Transverse colon (tissue), 4 donors: ENCODE measurements at regions of chr11 and their contacts with region 1.

Region 1: DNA sequence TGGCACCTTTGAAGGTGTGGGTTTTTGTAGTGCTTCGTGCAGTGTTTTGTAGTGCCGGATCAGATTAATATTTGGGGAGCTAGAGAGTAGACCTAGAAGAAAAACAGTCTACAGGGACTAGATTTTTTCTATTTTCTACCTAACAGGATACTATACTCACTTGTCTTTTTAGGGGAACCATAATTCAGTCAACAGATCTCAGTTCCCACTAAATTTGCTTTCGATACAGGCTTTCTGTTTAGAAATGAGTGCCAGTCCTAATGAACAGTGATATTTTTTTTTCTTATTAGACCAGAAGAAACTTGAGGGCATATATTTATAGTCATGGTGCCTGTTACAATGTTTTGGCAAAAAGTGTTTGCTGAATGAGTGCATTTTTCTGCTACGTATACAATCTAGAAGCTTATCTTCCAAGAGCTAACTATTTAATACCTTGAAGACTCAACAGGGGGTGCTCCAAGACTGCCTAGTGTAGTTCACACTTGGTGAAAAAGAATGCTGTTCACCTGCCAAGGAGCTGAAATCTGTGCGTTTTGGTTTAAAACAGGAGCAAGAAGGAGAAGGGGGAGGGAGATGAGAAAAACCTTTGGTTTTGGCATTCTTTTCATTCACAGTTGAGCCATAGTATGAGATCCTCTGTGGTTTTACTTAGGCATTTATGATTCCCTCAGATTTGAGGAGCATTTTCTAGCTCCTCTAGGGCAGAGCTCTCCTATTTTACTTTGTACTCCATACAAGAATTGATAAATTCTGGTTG is 44.9 kb upstream of the VSTM5 start:
- DNase-seq: no peak
- H3K4me3 ChIP-seq: no peak overlapping the region
- H3K27ac ChIP-seq: no peak overlapping the region
- H3K4me1 ChIP-seq: no peaks in the 10 kb centered on the region
- H3K27me3 ChIP-seq: peaks cover 11% of the 10 kb centered on the region
- CTCF ChIP-seq: peak; percentile 45 to 63 (median 51)
- EP300 ChIP-seq: no peak
- POLR2A ChIP-seq: no peak

Region 2: DNA sequence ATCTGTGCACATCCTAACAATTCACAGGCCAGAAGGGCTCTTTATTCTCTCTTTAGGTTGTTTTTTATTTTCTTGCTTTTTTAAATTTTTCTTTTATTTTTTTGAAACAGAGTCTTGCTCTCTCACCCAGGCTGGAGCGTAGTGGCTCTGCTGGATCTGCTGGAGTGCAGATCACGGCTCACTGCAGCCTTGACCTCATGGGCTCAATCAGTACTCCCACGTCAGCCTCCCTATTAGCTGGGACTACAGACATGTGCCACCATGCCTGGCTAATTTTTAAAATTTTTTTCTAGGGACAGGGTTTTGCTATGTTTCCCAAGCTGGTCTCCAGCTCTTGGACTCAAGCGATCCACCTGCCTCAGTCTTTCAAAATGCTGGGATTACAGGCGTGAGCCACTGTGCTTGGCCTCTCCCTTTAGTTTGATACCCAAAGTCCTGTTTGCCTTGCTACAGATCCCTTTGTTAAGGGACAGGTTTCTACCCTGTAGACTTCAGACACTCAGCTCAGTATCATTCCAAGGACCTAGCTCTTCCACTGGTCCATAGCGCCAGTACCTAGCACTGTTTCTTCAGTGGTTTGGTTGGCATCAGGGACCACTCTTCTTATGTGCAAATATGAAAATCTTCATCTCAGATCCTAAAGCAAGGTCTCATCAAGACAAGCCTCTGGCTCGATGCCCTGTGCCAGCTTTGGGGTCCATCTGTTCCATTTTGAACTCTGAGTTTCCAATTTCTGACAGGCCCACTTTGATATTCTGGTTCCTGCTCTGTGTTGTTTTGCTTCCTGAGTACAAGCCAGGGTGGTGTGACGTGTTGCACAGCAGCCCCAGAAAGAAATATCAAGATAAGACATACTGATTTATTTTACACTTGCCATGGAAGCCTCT is 1459.0 kb before region 1 on chr11:
- in situ Hi-C with region 1: no loop called
- intact Hi-C with region 1: loop called (anchors 5 kb)
- DNase-seq: no peak
- H3K4me3 ChIP-seq: no peak overlapping the region
- H3K27ac ChIP-seq: no peak overlapping the region
- H3K4me1 ChIP-seq: no peaks in the 10 kb centered on the region
- H3K27me3 ChIP-seq: no peaks in the 10 kb centered on the region
- CTCF ChIP-seq: no peak
- EP300 ChIP-seq: no peak
- POLR2A ChIP-seq: no peak

Region 3: DNA sequence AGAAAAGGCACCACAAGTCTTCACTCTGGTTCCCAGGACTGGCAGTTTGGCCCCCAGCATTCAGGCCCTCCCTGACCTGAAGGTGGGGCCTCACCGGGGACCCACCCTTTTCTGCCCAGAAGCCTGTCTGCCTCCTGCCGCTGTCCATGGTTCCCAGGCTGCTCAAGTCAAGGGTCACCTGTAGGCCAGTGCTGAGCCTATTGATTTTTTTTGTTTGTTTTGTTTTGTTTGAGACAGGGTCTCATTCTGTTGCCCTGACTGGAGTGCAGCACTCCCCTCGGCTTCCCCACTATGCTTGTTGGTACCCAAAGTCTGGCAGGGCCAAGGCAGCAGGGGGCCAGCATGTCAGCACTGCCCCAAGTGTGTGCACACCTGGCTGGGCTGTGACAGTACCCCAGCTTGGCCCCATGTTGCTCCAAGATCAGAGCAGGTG is 122.2 kb before region 1 on chr11:
- in situ Hi-C with region 1: no loop called
- intact Hi-C with region 1: no loop called
- DNase-seq: no peak
- H3K4me3 ChIP-seq: no peak overlapping the region
- H3K27ac ChIP-seq: no peak overlapping the region
- H3K4me1 ChIP-seq: no peaks in the 10 kb centered on the region
- H3K27me3 ChIP-seq: no peaks in the 10 kb centered on the region
- CTCF ChIP-seq: no peak
- EP300 ChIP-seq: no peak
- POLR2A ChIP-seq: no peak

Region 4: GRCh38 chr11:93869830-93870229 is 25.5 kb before region 1 on chr11:
- in situ Hi-C with region 1: no loop called
- intact Hi-C with region 1: loop called (anchors 1 kb)
- DNase-seq: no peak
- H3K4me3 ChIP-seq: no peak overlapping the region
- H3K27ac ChIP-seq: no peak overlapping the region
- H3K4me1 ChIP-seq: no peaks in the 10 kb centered on the region
- H3K27me3 ChIP-seq: no peaks in the 10 kb centered on the region
- CTCF ChIP-seq: no peak
- EP300 ChIP-seq: no peak
- POLR2A ChIP-seq: no peak

Region 5: GRCh38 chr11:94417386-94417987 is 522.2 kb after region 1 on chr11:
- in situ Hi-C with region 1: no loop called
- intact Hi-C with region 1: loop called (anchors 10 kb)
- DNase-seq: no peak
- H3K4me3 ChIP-seq: no peak overlapping the region
- H3K27ac ChIP-seq: no peak overlapping the region
- H3K4me1 ChIP-seq: no peaks in the 10 kb centered on the region
- H3K27me3 ChIP-seq: no peaks in the 10 kb centered on the region
- CTCF ChIP-seq: peak; percentile 22 to 37 (median 30)
- EP300 ChIP-seq: no peak
- POLR2A ChIP-seq: no peak

Region 6: DNA sequence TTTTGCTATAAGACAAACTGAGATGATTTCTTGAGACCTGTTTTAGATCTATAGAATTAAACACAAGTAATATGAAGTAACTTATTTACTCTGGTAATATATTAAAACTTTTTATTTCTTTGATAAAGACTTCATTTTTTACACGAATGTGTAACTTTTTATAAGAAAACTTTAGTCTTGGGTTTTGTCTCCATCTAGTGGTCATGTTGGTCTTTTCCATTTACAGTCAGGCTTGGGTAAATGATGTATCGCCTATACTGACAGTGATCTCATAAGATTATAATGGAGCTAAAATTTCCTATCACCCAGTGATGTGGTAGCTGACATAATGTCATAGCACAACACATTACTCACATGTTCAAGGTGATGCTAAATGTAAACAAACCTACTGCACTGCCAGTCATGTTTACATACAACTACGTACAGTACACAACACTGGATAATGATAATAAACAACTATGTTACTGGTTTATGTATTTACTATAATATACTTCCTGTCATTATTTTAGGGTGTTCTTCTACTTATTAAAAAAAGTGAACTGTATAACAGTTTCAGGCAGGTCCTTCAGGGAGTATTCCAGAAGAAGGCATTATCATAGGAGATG is 609.5 kb after region 1 on chr11:
- in situ Hi-C with region 1: loop called in 1 of 4 experiments (anchors 25 kb)
- intact Hi-C with region 1: loop called (anchors 10 kb)
- DNase-seq: no peak
- H3K4me3 ChIP-seq: no peak overlapping the region
- H3K27ac ChIP-seq: no peak overlapping the region
- H3K4me1 ChIP-seq: peaks cover 0 to 2% (median 0%) of the 10 kb centered on the region in 4 donors
- H3K27me3 ChIP-seq: no peaks in the 10 kb centered on the region
- CTCF ChIP-seq: peak; percentile 57 to 74 (median 68)
- EP300 ChIP-seq: no peak
- POLR2A ChIP-seq: no peak

Region 7: DNA sequence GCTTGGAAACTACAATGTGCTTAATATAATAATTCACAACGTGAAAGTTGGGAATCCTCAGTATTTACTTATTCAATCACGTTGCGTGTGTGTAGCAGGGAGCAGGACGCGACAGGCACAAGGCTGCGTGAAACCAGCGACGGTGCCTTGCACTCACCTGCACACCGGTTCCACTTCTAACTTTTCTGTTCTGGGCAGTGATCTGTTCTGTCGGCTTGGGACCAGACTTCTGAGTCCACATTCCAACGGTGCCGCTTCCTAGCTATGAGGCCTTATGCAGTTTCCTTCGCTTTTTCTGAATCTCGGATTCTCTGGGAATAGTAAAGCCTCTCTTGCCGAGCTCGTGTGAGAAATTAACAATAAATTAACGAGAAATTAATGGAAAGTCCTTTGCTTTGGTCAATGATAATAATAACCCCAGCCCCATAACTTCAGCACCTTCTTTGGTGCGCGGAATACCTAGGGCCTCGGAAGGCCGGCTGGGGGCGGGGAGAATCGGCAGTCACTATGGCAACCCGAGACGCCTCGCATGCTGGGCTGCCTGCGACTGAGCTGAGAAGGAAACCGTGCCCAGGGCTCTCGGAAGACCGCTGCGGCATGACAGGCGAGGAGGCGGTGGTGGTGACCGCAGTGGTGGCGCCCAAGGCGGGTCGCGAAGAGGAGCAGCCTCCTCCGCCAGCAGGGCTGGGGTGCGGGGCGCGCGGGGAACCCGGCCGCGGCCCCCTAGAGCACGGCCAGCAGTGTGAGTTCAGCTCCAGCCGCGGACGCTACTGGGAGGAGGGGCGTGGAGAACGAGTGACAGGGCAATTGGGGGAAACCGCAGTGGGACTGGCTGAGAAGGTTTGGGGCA is 616.9 kb after region 1 on chr11 and contains the start of gene C11orf97:
- in situ Hi-C with region 1: loop called in 1 of 4 experiments (anchors 25 kb)
- intact Hi-C with region 1: loop called (anchors 10 kb)
- DNase-seq: peak; percentile 59
- H3K4me3 ChIP-seq: peak within 1 kb of the TSS; percentile 15 to 66 (median 45)
- H3K27ac ChIP-seq: peak within 1 kb of the TSS in 3 of 4 donors; percentile 21 to 34 (median 24)
- H3K4me1 ChIP-seq: peaks cover 0 to 20% (median 11%) of the 10 kb centered on the region in 4 donors
- H3K27me3 ChIP-seq: no peaks in the 10 kb centered on the region
- CTCF ChIP-seq: no peak
- EP300 ChIP-seq: no peak
- POLR2A ChIP-seq: no peak
- total RNA-seq, gene C11orf97: not detected